Heart left ventricle (tissue), 16 donors: ENCODE measurements at regions of chr15 and their contacts with region 1.

Region 1: DNA sequence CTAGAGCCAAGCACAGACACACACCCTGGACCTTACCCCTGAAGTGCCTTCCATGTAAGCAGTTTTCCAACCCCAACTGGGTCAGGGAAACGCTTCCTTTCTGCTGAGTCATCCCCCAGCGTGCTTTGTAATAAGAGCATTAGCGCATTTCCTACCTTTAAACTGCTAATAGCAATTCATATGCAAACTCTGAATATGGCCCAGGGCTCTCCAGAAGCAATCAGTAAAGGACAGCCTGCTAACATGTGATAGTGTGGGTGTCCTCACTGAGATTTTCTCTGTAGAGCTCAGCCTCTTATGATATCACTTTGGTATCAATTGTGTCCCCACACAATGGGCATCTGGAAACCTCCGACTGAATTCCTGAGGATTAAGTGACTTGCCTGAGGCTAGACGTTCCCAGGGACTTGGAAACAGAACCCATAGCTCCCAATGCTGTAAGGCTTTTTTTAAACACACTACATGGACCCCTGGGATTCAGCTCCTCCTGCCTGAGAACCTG is 5.6 kb downstream of the GABRB3 start:
- DNase-seq: no peak
- ATAC-seq: no peak
- H3K4me3 ChIP-seq: no peak overlapping the region
- H3K27ac ChIP-seq: no peak overlapping the region
- H3K4me1 ChIP-seq: peaks cover 0 to 10% (median 0%) of the 10 kb centered on the region in 12 donors
- H3K27me3 ChIP-seq: peaks cover 0 to 56% (median 10%) of the 10 kb centered on the region in 9 donors
- CTCF ChIP-seq: no peak
- POLR2A ChIP-seq: no peak

Region 2: GRCh38 chr15:26716069-26716468 is 51.2 kb before region 1 on chr15:
- intact Hi-C with region 1: loop called in 1 of 10 experiments (anchors 5 kb)
- DNase-seq: no peak
- ATAC-seq: no peak
- H3K4me3 ChIP-seq: no peak overlapping the region
- H3K27ac ChIP-seq: no peak overlapping the region
- H3K4me1 ChIP-seq: no peaks in the 10 kb centered on the region
- H3K27me3 ChIP-seq: peaks cover 0 to 7% (median 0%) of the 10 kb centered on the region in 9 donors
- CTCF ChIP-seq: no peak
- POLR2A ChIP-seq: no peak

Region 3: DNA sequence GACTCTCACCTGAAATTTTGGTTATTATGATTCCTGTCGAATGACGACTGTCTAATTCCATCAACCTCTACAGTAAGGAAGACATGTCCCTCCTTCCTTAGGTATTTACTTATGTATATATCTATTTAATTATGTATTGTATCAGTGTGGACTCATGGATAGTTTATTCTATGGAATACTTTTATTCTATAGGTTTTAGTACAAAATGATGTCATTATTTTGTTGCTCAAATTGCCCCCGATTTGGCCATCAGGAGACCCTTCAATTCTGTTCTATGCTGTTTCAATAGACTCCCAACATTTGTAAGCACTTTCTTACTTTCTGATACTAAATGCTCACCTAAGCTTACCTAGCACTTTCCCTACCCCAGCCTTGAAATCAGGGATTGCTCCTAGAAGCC is 40.0 kb before region 1 on chr15:
- intact Hi-C with region 1: no loop called
- DNase-seq: no peak
- ATAC-seq: no peak
- H3K4me3 ChIP-seq: no peak overlapping the region
- H3K27ac ChIP-seq: no peak overlapping the region
- H3K4me1 ChIP-seq: no peaks in the 10 kb centered on the region
- H3K27me3 ChIP-seq: no peaks in the 10 kb centered on the region
- CTCF ChIP-seq: no peak
- POLR2A ChIP-seq: no peak